Ascending aorta (tissue), 2 donors: ENCODE measurements at regions of chr4 and their contacts with region 1.

Region 1: GRCh38 chr4:105715692-105716278 is 7.2 kb downstream of the GSTCD start:
- DNase-seq: no peak
- H3K4me3 ChIP-seq: peak overlapping the region in 1 of 2 donors; percentile 32
- H3K27ac ChIP-seq: no peak overlapping the region
- H3K4me1 ChIP-seq: peaks cover 2 to 4% of the 10 kb centered on the region in 2 donors
- H3K27me3 ChIP-seq: no peaks in the 10 kb centered on the region
- CTCF ChIP-seq: peak in 2 of 3 experiments; percentile 45 to 58

Region 2: GRCh38 chr4:104490770-104491480 is 1224.9 kb before region 1 on chr4:
- intact Hi-C with region 1: loop called (anchors 5 kb)
- DNase-seq: peak; percentile 12 to 79
- H3K4me3 ChIP-seq: peak overlapping the region; percentile 58 to 72
- H3K27ac ChIP-seq: peak overlapping the region; percentile 63 to 70
- H3K4me1 ChIP-seq: no peaks in the 10 kb centered on the region
- H3K27me3 ChIP-seq: no peaks in the 10 kb centered on the region
- CTCF ChIP-seq: no peak

Region 3: GRCh38 chr4:105741548-105741947 is 25.8 kb after region 1 on chr4:
- intact Hi-C with region 1: no loop called
- DNase-seq: no peak
- H3K4me3 ChIP-seq: no peak overlapping the region
- H3K27ac ChIP-seq: no peak overlapping the region
- H3K4me1 ChIP-seq: no peaks in the 10 kb centered on the region
- H3K27me3 ChIP-seq: no peaks in the 10 kb centered on the region
- CTCF ChIP-seq: no peak

Region 4: GRCh38 chr4:105808750-105809041 is 92.9 kb after region 1 on chr4:
- intact Hi-C with region 1: loop called (anchors 5 kb)
- DNase-seq: peak in 1 of 2 donors; percentile 73
- H3K4me3 ChIP-seq: peak overlapping the region; percentile 44 to 49
- H3K27ac ChIP-seq: peak overlapping the region; percentile 56 to 65
- H3K4me1 ChIP-seq: peaks cover 0 to 6% of the 10 kb centered on the region in 2 donors
- H3K27me3 ChIP-seq: no peaks in the 10 kb centered on the region
- CTCF ChIP-seq: no peak

Region 5: DNA sequence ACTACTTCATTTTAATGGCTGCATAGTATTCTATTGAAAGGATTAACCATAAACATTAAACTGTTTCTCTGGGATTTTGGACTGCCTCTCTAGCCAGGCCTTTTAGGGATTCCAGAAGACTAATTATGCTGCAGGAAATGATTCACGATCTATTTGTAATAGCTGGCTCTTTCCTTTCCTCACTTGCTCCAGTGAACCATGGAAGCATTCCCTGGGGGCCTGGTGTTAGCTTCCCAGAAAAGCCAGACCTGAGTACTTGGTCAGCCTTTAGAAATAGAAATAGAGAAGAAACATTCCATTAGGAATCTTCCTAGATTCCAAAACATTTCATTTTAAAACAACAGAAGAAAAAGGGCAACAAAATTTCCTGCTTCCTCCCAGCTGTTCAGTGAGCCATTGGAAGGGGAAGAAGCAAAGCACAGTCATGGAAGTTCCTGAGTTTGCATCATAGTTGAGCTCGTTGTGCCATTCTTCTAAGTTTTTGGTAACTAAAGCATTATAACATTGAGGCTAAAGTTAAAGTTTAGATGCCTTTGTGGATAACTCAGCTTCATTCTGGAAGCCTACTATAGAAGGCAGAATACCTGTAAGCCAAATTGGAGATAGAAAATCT is 263.0 kb after region 1 on chr4:
- intact Hi-C with region 1: loop called (anchors 10 kb)
- DNase-seq: peak; percentile 25 to 88
- H3K4me3 ChIP-seq: no peak overlapping the region
- H3K27ac ChIP-seq: peak overlapping the region; percentile 84 to 89
- H3K4me1 ChIP-seq: peaks cover 3 to 7% of the 10 kb centered on the region in 2 donors
- H3K27me3 ChIP-seq: no peaks in the 10 kb centered on the region
- CTCF ChIP-seq: no peak

Region 6: GRCh38 chr4:106795326-106795725 is 1079.5 kb after region 1 on chr4:
- intact Hi-C with region 1: no loop called
- DNase-seq: no peak
- H3K4me3 ChIP-seq: no peak overlapping the region
- H3K27ac ChIP-seq: no peak overlapping the region
- H3K4me1 ChIP-seq: no peaks in the 10 kb centered on the region
- H3K27me3 ChIP-seq: no peaks in the 10 kb centered on the region
- CTCF ChIP-seq: no peak